T-cell (primary cell): ENCODE measurements at regions of chr13 and their contacts with region 1.

Region 1: GRCh38 chr13:28349907-28350654 is 144.8 kb downstream of the FLT1 start:
- DNase-seq: no peak
- ATAC-seq: no peak
- H3K4me3 ChIP-seq: no peak overlapping the region
- H3K4me3 Mint-ChIP-seq: no peak overlapping the region
- H3K27ac ChIP-seq: no peak overlapping the region
- H3K27ac Mint-ChIP-seq: no peak overlapping the region
- H3K4me1 ChIP-seq: peaks cover 4 to 16% of the 10 kb centered on the region in 2 experiments
- H3K4me1 Mint-ChIP-seq: peaks cover 18 to 29% (median 26%) of the 10 kb centered on the region in 3 donors
- H3K27me3 ChIP-seq: peaks cover 0 to 5% of the 10 kb centered on the region in 2 experiments
- H3K27me3 Mint-ChIP-seq: peaks cover 0 to 5% of the 10 kb centered on the region in 2 donors

Region 2: DNA sequence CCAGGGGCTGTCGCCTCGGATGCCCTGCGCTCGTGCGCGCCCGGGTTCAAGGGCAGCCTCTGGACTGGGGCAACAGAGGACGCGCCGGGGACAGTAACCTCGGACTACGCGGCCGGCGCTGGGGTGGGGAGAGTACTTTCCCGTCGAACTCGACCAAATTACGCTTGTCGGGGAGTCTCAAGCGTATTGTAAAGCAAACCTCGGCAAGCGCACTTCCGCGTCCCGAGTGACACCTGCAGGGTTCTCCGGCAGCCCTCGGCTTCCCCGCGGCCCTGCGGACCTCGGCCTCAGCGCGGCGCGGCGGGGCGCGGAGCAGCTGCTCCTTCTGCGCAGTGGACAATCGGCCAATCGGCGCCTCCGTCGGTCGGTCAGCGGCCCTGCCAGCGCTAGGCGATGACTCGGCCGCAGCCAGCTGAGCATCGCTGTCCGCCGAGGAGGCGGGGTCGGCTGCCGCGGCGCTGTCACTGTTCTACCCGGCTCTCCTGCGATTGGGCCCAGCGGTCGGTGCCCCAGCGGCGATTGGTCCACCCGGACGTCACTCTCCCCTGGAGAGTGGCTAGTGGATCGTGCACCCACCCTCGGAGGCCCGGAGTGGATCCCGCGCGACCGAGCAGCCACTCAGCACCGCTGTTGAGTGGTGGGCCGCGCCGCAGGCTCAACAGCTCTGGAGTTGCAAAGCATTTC is 368.6 kb after region 1 on chr13 and contains the start of gene SLC46A3:
- CTCF ChIA-PET with region 1: interaction called in 1 of 2 experiments, 10 read pairs
- POLR2A ChIA-PET with region 1: no interaction called
- DNase-seq: peak; percentile 92 to 99 (median 97)
- ATAC-seq: peak; percentile 98 to 99 (median 98)
- H3K4me3 ChIP-seq: peak within 1 kb of the TSS; percentile 94 to 95
- H3K4me3 Mint-ChIP-seq: peak within 1 kb of the TSS; percentile 91 to 98 (median 97)
- H3K27ac ChIP-seq: peak within 1 kb of the TSS; percentile 85
- H3K27ac Mint-ChIP-seq: peak within 1 kb of the TSS; percentile 85 to 98
- H3K4me1 ChIP-seq: peaks cover 8 to 18% of the 10 kb centered on the region in 2 experiments
- H3K4me1 Mint-ChIP-seq: peaks cover 39 to 43% (median 40%) of the 10 kb centered on the region in 3 donors
- H3K27me3 ChIP-seq: no peaks in the 10 kb centered on the region
- H3K27me3 Mint-ChIP-seq: no peaks in the 10 kb centered on the region
- total RNA-seq, gene SLC46A3: 12.1 to 20.7 (median 18.2) TPM